Activated CD4-positive, alpha-beta T cell treated with anti-CD3 and anti-CD28 coated beads, Interleukin-2, amount 10 ng/mL, durations not matched to agents 7 days and 5 days (primary cell): ENCODE measurements at regions of chr18 and their contacts with region 1.

Region 1: GRCh38 chr18:681985-682384 is 24.5 kb downstream of the TYMS start:
- DNase-seq: peak; percentile 87
- H3K4me3 Mint-ChIP-seq: peak overlapping the region; percentile 7
- H3K27ac Mint-ChIP-seq: peak overlapping the region; percentile 94
- H3K4me1 Mint-ChIP-seq: peaks cover 28% of the 10 kb centered on the region
- H3K27me3 Mint-ChIP-seq: no peaks in the 10 kb centered on the region

Region 2: GRCh38 chr18:394997-395383 is 287.0 kb before region 1 on chr18:
- CTCF ChIA-PET with region 1: no interaction called
- POLR2A ChIA-PET with region 1: no interaction called
- DNase-seq: no peak
- H3K4me3 Mint-ChIP-seq: no peak overlapping the region
- H3K27ac Mint-ChIP-seq: no peak overlapping the region
- H3K4me1 Mint-ChIP-seq: no peaks in the 10 kb centered on the region
- H3K27me3 Mint-ChIP-seq: peaks cover 10% of the 10 kb centered on the region

Region 3: GRCh38 chr18:693466-694187 is 11.6 kb after region 1 on chr18:
- CTCF ChIA-PET with region 1: interaction called, 12 read pairs
- POLR2A ChIA-PET with region 1: no interaction called
- DNase-seq: no peak
- H3K4me3 Mint-ChIP-seq: no peak overlapping the region
- H3K27ac Mint-ChIP-seq: no peak overlapping the region
- H3K4me1 Mint-ChIP-seq: peaks cover 15% of the 10 kb centered on the region
- H3K27me3 Mint-ChIP-seq: no peaks in the 10 kb centered on the region

Region 4: DNA sequence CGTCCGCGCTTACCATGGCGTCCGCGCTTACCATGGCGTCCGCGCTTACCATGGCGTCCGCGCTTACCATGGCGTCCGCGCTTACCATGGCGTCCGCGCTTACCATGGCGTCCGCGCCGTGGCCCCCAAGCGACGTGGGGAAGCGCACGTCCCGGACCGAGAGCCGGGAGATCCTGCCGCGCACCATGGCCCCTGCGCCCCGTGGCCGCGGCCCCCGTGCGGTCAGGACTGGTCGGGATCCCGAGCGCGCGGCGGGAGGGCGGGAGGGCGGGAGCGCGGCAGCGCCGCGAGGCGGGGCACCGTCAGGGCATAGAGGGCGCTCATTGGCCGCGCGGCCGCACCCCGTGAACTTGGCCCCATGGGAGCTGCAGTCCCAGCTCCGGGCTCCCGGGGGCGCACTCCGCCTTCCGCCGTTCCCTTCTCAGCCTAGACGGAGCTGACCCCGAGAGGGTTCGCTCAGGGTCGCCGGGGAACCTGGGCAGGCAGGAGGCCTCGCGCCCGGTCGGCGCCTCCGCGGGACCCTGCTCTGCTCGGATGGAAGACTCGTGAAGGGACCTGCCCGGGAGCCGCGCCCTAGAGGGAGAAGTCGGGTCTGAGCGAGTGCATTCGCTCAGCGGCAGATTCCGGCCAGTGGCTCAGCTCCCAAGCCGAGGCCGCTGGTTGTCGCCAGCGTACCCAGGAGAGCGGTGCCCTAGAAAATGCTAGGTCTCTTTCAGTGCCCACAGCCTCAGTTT is 30.6 kb after region 1 on chr18 and contains the start of gene ENOSF1:
- CTCF ChIA-PET with region 1: interaction called, 16 read pairs
- POLR2A ChIA-PET with region 1: no interaction called
- DNase-seq: peak; percentile 83
- H3K4me3 Mint-ChIP-seq: peak within 1 kb of the TSS; percentile 80
- H3K27ac Mint-ChIP-seq: peak within 1 kb of the TSS; percentile 95
- H3K4me1 Mint-ChIP-seq: peaks cover 40% of the 10 kb centered on the region
- H3K27me3 Mint-ChIP-seq: no peaks in the 10 kb centered on the region
- total RNA-seq, gene ENOSF1: 67.2 to 70.3 TPM